AG04449 (cell line): ENCODE measurements at regions of chr6 and their contacts with region 1.

Region 1: GRCh38 chr6:41080621-41081020 is 7.8 kb downstream of the NFYA start:
- DNase-seq: no peak
- H3K4me3 ChIP-seq: no peak overlapping the region
- CTCF ChIP-seq: no peak

Region 2: DNA sequence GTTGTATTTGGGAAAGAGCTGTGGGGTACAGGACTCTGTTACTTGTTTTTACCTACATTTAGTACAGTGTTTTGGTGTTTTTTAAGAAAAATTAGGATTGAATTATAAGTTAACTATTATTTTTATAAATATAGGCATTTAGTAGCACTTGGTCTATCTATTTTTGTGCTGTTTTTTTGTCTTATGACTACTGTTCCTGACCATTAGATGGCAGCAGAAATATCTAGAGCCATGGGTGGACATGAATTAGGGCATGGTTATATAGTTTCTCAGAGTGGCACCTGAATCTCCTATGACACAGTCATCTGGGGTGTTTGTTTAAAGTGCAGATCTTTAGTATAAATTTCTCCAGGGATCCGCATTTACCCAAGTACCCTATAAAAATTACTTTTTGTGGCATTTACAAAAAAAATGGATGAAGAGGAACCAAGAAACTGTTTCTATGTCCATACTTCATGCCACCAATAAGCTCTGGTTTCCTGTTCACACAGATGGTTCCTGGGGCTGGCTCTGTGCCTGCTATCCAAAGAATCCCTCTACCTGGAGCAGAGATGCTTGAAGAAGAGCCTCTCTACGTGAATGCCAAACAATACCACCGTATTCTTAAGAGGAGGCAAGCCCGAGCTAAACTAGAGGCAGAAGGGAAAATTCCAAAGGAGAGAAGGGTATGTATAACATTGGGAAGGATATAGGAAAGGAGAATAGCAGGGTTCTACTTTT is 12.0 kb after region 1 on chr6:
- CTCF ChIA-PET with region 1: interaction called, 25 read pairs
- POLR2A ChIA-PET with region 1: no interaction called
- DNase-seq: no peak
- H3K4me3 ChIP-seq: no peak overlapping the region
- CTCF ChIP-seq: peak; percentile 43

Region 3: DNA sequence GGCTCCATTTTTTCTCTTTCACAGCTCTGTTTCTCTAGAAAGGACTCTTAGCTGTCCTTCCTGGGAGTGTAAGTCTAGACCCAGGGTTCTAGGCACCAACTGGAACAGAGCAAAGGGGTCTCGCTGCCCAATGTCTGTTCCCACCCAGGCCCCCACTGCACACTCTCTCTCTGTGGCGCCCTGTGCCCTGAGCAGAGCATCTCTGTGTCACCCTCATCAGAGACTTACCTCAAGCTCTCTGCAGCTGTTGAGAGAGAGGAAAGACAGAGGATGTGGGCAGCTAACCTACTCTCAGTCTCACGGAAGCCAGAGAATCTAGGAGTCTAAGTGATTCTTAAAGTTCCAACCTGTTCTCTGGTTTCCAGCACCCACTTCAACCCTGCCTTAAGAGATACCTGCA is 264.3 kb after region 1 on chr6:
- CTCF ChIA-PET with region 1: no interaction called
- POLR2A ChIA-PET with region 1: no interaction called
- DNase-seq: no peak
- H3K4me3 ChIP-seq: no peak overlapping the region
- CTCF ChIP-seq: no peak